ENCODE measurements at regions of chr3 and their contacts with region 1.

Region 1: GRCh38 chr3:30180310-30181177 is 425.9 kb upstream of the TGFBR2 start:
- DNase-seq: no peak
- ATAC-seq: no peak
- H3K4me3 Mint-ChIP-seq: no peak overlapping the region
- H3K27ac Mint-ChIP-seq: no peak overlapping the region
- H3K4me1 Mint-ChIP-seq: no peaks in the 10 kb centered on the region
- H3K27me3 Mint-ChIP-seq: peaks cover 2% of the 10 kb centered on the region
- CTCF ChIP-seq: no peak

Region 2: DNA sequence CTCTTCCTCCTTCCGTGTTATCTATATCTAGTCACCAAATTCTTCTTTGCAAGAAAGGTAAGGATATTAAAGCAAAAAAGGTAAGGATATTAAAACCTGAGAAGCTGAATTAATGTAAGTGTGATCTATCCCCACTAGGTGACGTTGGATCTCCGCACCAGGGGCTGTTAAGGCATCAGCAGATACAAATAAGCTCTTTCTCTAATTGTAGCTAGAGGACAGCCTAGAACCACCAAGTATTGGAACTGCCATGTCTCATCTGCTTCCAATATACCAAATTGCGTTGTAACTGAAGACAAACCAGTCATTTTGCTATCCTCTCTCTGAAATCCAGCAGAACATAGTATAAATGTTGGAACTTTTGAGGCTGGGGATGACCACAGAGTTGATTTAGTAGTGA is 45.4 kb before region 1 on chr3:
- CTCF ChIA-PET with region 1: no interaction called
- POLR2A ChIA-PET with region 1: no interaction called
- intact Hi-C with region 1: loop called (anchors 5 kb)
- DNase-seq: no peak
- ATAC-seq: no peak
- H3K4me3 Mint-ChIP-seq: no peak overlapping the region
- H3K27ac Mint-ChIP-seq: no peak overlapping the region
- H3K4me1 Mint-ChIP-seq: no peaks in the 10 kb centered on the region
- H3K27me3 Mint-ChIP-seq: no peaks in the 10 kb centered on the region
- CTCF ChIP-seq: no peak